OCI-LY7 (cell line): ENCODE measurements at regions of chr3 and their contacts with region 1.

Region 1: GRCh38 chr3:140863580-140864009 is 78.0 kb upstream of the SLC25A36 start:
- DNase-seq: peak; percentile 84
- H3K4me3 ChIP-seq: no peak overlapping the region
- H3K27ac ChIP-seq: no peak overlapping the region
- H3K4me1 ChIP-seq: peaks cover 16% of the 10 kb centered on the region
- CTCF ChIP-seq: peak; percentile 87

Region 2: DNA sequence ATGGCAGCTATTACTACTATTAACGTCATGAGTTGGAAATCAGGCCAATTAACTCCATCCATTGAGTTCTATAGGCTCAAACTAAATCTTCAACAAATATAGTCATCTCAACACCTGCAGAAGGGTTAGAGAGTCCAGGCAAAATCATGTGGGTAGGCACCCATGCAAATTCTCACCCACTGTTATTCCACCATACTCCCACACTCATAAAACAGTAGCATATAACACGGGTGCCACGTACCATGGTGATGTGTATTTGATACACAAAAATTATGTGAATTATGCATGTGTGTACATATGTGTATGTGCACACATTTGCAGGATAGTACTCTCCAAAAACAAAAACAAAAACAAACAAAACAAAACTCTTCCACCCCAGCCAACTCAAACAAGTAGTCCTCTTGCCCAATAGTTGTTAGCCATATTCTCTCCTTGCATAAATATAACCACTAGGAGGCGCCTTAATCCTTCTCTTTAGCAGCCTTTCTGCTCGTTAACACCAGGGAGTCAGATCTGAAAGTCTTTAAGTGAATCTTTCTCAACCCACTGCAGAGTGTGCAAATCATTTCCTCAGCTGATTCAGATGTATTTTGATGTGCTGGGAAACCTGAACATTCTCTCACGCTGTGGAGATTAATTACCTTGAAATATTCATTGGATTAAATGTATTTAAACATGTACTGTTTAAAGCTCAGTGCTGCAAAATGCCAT is 1436.2 kb before region 1 on chr3:
- CTCF ChIA-PET with region 1: no interaction called
- POLR2A ChIA-PET with region 1: no interaction called
- intact Hi-C with region 1: loop called (anchors 5 kb)
- DNase-seq: peak; percentile 70
- H3K4me3 ChIP-seq: no peak overlapping the region
- H3K27ac ChIP-seq: no peak overlapping the region
- H3K4me1 ChIP-seq: no peaks in the 10 kb centered on the region
- CTCF ChIP-seq: peak; percentile 90

Region 3: GRCh38 chr3:139935016-139935865 is 928.4 kb before region 1 on chr3 and contains the start of gene CLSTN2:
- CTCF ChIA-PET with region 1: no interaction called
- POLR2A ChIA-PET with region 1: no interaction called
- intact Hi-C with region 1: loop called (anchors 10 kb)
- DNase-seq: no peak
- H3K4me3 ChIP-seq: no peak within 1 kb of the TSS
- H3K27ac ChIP-seq: no peak within 1 kb of the TSS
- H3K4me1 ChIP-seq: no peaks in the 10 kb centered on the region
- CTCF ChIP-seq: no peak
- total RNA-seq, gene CLSTN2: not detected in 2 replicates

Region 4: GRCh38 chr3:140023616-140024530 is 839.7 kb before region 1 on chr3:
- CTCF ChIA-PET with region 1: no interaction called
- POLR2A ChIA-PET with region 1: no interaction called
- intact Hi-C with region 1: no loop called
- DNase-seq: no peak
- H3K4me3 ChIP-seq: no peak overlapping the region
- H3K27ac ChIP-seq: no peak overlapping the region
- H3K4me1 ChIP-seq: no peaks in the 10 kb centered on the region
- CTCF ChIP-seq: no peak

Region 5: GRCh38 chr3:140128631-140129030 is 735.0 kb before region 1 on chr3:
- CTCF ChIA-PET with region 1: no interaction called
- POLR2A ChIA-PET with region 1: no interaction called
- intact Hi-C with region 1: loop called (anchors 2 kb)
- DNase-seq: peak; percentile 35
- H3K4me3 ChIP-seq: no peak overlapping the region
- H3K27ac ChIP-seq: no peak overlapping the region
- H3K4me1 ChIP-seq: no peaks in the 10 kb centered on the region
- CTCF ChIP-seq: peak; percentile 73

Region 6: GRCh38 chr3:140753865-140754754 is 109.5 kb before region 1 on chr3:
- CTCF ChIA-PET with region 1: interaction called, 5 read pairs
- POLR2A ChIA-PET with region 1: interaction called, 4 read pairs
- intact Hi-C with region 1: loop called (anchors 1 kb)
- DNase-seq: peak; percentile 73
- H3K4me3 ChIP-seq: peak overlapping the region; percentile 27
- H3K27ac ChIP-seq: peak overlapping the region; percentile 79
- H3K4me1 ChIP-seq: peaks cover 62% of the 10 kb centered on the region
- CTCF ChIP-seq: peak; percentile 70